ENCODE measurements at regions of chr11 and their contacts with region 1.

Region 1: GRCh38 chr11:103987629-103988594 is 48.5 kb upstream of the DDI1 start:
- DNase-seq: peak; percentile 17
- ATAC-seq: peak; percentile 81
- H3K4me3 ChIP-seq: no peak overlapping the region
- H3K27ac ChIP-seq: peak overlapping the region; percentile 92; the same call in 1 of the 2 replicates
- H3K4me1 ChIP-seq: peaks cover 11% of the 10 kb centered on the region
- H3K27me3 ChIP-seq: no peaks in the 10 kb centered on the region; the same call in 1 of the 2 replicates
- CTCF ChIP-seq: no peak
- POLR2A ChIP-seq: no peak
- RAD21 ChIP-seq: no peak

Region 2: GRCh38 chr11:103953797-103954486 is 34.0 kb before region 1 on chr11:
- CTCF ChIA-PET with region 1: interaction called, 11 read pairs
- POLR2A ChIA-PET with region 1: no interaction called
- dilution Hi-C with region 1: no loop called
- in situ Hi-C with region 1: no loop called
- intact Hi-C with region 1: no loop called
- DNase-seq: no peak
- ATAC-seq: no peak
- H3K4me3 ChIP-seq: no peak overlapping the region
- H3K27ac ChIP-seq: no peak overlapping the region
- H3K4me1 ChIP-seq: no peaks in the 10 kb centered on the region; the same call in 1 of the 2 replicates
- H3K27me3 ChIP-seq: no peaks in the 10 kb centered on the region
- CTCF ChIP-seq: no peak
- POLR2A ChIP-seq: no peak
- RAD21 ChIP-seq: no peak